Mammary epithelial cell (primary cell): ENCODE measurements at regions of chr3 and their contacts with region 1.

Region 1: DNA sequence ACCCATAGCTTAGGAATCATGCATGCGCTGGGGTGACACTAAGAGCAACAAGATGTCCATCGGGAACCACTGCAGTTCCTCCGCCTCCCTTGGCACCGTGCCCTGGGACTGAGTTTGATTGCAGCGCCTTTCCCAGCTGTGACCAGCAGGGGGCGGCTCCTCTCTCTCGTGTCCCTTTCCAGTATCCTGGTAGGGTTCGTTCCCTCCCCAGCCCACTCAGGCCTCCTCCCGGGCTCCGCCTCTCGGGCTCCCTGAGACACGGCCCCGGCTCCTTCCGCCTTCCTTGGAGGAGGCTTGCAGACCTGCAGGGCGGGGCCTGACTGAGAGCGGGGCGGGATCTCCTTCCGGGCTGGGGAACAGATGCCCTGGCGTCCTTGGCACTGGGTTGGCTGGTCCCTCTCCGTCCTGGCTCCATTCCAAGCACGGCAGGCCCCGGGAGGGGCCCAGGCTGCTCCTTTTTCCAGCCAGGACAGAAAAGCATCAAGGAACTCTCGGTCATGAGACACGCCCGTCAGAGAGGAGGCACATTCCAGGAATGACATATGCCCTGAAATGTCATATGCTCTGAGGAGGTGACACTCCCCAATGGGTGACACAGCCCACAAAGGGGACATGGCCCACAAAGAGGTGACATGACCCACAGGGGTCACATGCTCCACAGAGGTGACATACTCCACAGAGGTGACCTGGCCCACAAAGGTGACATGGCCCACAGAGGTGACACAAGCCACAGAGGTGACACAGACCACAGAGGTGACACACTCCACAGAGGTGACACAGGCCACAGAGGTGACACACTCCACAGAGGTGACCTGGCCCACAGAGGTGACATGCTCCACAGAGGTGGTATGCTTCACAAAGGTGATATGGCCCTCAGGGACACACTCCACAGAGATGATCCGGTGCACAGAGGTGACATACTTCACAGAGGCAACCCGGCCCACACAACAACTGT is 79.0 kb downstream of the ABHD5 start:
- DNase-seq: peak; percentile 90
- H3K4me3 ChIP-seq: peak overlapping the region in 1 of 3 experiments; percentile 27
- H3K27ac ChIP-seq: no peak overlapping the region
- H3K4me1 ChIP-seq: peaks cover 56% of the 10 kb centered on the region
- H3K27me3 ChIP-seq: no peaks in the 10 kb centered on the region
- CTCF ChIP-seq: peak; percentile 90 to 93

Region 2: DNA sequence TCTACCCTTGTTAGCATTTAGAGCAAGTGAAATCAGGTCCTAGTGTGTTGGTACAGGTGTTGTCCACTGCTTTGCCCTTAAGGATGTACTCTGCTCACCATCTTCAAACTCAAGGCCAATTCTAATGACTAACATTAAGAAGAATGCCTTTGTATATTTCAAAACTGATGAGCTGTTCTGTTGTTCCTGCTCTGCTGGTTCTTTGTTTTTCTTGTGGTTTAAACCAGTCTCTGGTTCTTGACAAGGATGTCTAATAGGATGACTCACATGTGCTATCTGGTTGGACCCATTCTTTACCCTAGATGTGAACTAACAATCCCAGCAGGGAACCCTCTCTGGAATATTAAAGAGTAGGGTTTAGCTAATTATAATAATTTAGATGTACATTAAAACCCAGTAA is 61.8 kb before region 1 on chr3:
- CTCF ChIA-PET with region 1: no interaction called
- dilution Hi-C with region 1: no loop called
- in situ Hi-C with region 1: no loop called
- intact Hi-C with region 1: loop called (anchors 5 kb)
- DNase-seq: peak; percentile 95
- H3K4me3 ChIP-seq: no peak overlapping the region
- H3K27ac ChIP-seq: peak overlapping the region; percentile 23
- H3K4me1 ChIP-seq: peaks cover 29% of the 10 kb centered on the region
- H3K27me3 ChIP-seq: no peaks in the 10 kb centered on the region
- CTCF ChIP-seq: no peak

Region 3: GRCh38 chr3:43855674-43856299 is 86.0 kb after region 1 on chr3:
- CTCF ChIA-PET with region 1: no interaction called
- dilution Hi-C with region 1: no loop called
- in situ Hi-C with region 1: no loop called
- intact Hi-C with region 1: loop called (anchors 5 kb)
- DNase-seq: peak; percentile 49
- H3K4me3 ChIP-seq: no peak overlapping the region
- H3K27ac ChIP-seq: no peak overlapping the region
- H3K4me1 ChIP-seq: peaks cover 19% of the 10 kb centered on the region
- H3K27me3 ChIP-seq: no peaks in the 10 kb centered on the region
- CTCF ChIP-seq: peak; percentile 60 to 87

Region 4: GRCh38 chr3:43998836-43999727 is 229.3 kb after region 1 on chr3:
- CTCF ChIA-PET with region 1: no interaction called
- dilution Hi-C with region 1: no loop called
- in situ Hi-C with region 1: no loop called
- intact Hi-C with region 1: loop called (anchors 1 kb)
- DNase-seq: peak; percentile 51
- H3K4me3 ChIP-seq: peak overlapping the region; percentile 82 to 99 (median 82)
- H3K27ac ChIP-seq: peak overlapping the region; percentile 16
- H3K4me1 ChIP-seq: peaks cover 35% of the 10 kb centered on the region
- H3K27me3 ChIP-seq: no peaks in the 10 kb centered on the region
- CTCF ChIP-seq: no peak

Region 5: DNA sequence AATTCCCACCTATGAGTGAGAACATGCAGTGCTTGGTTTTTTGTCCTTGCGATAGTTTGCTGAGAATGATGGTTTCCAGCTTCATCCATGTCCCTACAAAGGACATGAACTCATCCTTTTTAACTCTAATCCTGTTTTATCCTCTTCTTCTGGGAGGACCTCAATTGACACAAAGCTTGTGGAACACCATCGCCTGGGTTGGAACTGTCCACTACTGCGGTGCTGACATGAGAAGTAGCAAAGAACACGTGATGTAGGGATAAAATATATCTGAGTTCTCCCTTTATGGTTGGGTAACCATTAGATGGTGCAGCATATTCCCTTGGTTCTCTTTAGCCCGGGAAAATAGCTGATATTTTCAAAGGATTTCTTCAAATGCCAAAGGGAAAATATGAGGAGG is 366.7 kb after region 1 on chr3:
- CTCF ChIA-PET with region 1: interaction called, 9 read pairs
- dilution Hi-C with region 1: no loop called
- in situ Hi-C with region 1: no loop called
- intact Hi-C with region 1: loop called (anchors 1 kb)
- DNase-seq: peak; percentile 23
- H3K4me3 ChIP-seq: no peak overlapping the region
- H3K27ac ChIP-seq: no peak overlapping the region
- H3K4me1 ChIP-seq: peaks cover 12% of the 10 kb centered on the region
- H3K27me3 ChIP-seq: no peaks in the 10 kb centered on the region
- CTCF ChIP-seq: no peak

Region 6: DNA sequence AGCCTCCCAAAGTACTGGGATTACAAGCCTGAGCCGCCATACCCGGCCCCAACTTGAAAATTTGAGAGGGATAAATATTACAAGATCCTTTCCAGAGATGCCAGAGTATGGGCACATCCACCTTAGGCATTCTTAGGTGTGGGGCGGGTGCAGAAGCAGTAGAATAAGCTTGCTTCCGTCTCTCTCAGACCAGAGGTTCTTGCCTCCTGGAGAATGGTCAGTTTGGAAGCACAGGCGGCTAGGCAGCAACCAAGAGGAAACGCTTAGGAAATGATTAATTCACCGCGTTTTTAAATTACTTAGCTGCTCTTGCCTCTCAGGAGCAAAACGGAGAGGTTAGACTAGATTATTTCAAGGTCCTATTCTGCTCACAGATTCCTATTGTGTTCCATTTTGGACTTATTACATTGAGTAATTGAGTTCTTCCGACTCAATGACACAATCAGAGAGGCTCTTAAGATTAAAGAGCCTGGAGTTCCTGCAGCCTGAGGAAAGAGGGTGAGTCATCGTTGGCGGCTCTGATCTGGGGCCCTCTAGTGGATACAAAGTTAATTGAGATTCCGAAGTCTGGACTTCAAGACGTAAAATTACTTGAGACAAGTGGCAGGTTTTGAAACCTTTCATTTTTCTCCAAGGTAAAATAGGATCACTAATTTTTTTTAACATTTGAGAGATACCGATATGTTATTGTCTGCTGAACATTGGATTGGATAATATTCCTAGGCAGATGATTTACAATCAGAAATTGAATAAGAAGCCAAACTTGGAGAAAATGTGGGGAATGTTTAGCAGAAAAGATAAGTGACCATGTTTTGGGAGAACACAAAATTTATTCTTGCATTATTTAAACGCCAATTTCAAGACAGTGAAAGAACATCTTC is 466.1 kb after region 1 on chr3:
- CTCF ChIA-PET with region 1: no interaction called
- dilution Hi-C with region 1: no loop called
- in situ Hi-C with region 1: no loop called
- intact Hi-C with region 1: loop called (anchors 1 kb)
- DNase-seq: peak; percentile 76
- H3K4me3 ChIP-seq: no peak overlapping the region
- H3K27ac ChIP-seq: no peak overlapping the region
- H3K4me1 ChIP-seq: no peaks in the 10 kb centered on the region
- H3K27me3 ChIP-seq: no peaks in the 10 kb centered on the region
- CTCF ChIP-seq: peak; percentile 69 to 70

Region 7: GRCh38 chr3:44966750-44967278 is 1197.1 kb after region 1 on chr3:
- CTCF ChIA-PET with region 1: no interaction called
- dilution Hi-C with region 1: no loop called
- in situ Hi-C with region 1: no loop called
- intact Hi-C with region 1: no loop called
- DNase-seq: peak; percentile 99
- H3K4me3 ChIP-seq: peak overlapping the region in 1 of 3 experiments; percentile 14
- H3K27ac ChIP-seq: peak overlapping the region; percentile 93
- H3K4me1 ChIP-seq: peaks cover 85% of the 10 kb centered on the region
- H3K27me3 ChIP-seq: no peaks in the 10 kb centered on the region
- CTCF ChIP-seq: no peak